ENCODE measurements at regions of chr11 and their contacts with region 1.

Region 1: DNA sequence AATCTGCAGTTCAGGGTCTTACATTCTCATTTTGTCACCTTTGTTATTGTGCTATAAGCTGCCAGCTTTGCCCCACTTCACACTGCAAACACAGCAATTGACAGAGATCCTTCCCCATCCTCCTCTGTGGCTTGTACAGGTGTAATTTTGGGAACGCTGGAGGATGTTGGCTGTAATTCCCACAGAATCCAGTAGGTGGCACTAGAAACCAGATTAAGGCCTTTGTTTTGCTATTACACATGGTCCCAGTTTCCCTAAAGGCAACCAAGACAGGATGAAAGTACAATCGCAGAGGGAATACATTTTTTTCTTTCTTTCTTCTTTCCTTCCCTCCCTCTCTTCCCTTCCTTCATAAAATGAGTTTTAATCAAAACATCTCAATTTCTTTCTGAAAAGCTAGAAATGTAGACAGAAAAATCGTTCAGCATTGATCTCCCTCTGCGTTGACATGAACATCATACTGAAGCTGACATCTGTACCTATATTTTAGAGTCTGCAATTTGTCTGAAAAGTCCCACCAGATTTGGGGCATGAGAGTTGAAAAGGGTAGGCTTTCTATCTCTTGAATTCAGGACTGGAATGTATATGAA is 21.3 kb upstream of the NELL1 start:
- DNase-seq: peak; percentile 37 to 50
- H3K4me3 ChIP-seq: no peak overlapping the region
- CTCF ChIP-seq: peak in 1 of 3 donors; percentile 60
- POLR2A ChIP-seq: no peak

Region 2: DNA sequence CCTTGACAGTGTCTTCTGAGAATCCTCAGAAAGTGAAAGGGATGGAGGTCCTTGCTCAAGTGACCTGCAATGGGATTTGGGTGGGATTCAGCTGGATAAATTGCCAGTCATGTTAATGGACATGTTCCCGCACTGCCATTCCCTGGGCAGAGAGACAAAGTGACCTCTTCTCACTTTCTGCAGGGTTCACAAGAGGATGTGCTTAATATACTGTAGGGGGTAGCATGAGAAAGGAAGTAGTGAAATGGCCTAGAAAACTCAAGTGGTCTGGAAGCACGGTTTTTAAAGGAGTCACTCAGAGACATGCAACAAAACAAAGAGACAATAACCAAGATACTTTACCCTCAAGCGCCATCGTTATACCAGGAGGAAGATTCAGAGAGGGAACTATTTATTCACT is 91.5 kb after region 1 on chr11:
- intact Hi-C with region 1: no loop called
- DNase-seq: no peak
- H3K4me3 ChIP-seq: no peak overlapping the region
- CTCF ChIP-seq: no peak
- POLR2A ChIP-seq: no peak

Region 3: DNA sequence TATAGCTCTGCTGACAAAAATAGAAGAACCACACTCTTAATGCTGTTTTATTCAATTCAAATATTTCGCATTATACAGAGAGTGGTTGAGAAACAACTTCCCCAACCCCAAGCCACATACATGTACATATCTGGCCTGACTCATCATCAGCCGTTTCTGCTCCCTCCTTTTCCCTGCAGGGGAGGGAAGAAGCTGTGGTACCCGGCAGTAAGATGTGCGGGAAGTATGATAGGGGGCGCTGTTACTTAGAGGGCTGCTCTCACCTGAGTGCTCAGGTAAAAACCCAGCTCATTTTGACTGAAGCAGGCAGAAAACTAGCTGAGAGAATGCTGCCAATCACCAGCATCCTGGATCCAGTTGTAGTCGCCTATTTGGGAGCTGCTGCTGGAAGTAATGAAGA is 106.9 kb after region 1 on chr11:
- intact Hi-C with region 1: no loop called
- DNase-seq: no peak
- H3K4me3 ChIP-seq: no peak overlapping the region
- CTCF ChIP-seq: no peak
- POLR2A ChIP-seq: no peak

Region 4: DNA sequence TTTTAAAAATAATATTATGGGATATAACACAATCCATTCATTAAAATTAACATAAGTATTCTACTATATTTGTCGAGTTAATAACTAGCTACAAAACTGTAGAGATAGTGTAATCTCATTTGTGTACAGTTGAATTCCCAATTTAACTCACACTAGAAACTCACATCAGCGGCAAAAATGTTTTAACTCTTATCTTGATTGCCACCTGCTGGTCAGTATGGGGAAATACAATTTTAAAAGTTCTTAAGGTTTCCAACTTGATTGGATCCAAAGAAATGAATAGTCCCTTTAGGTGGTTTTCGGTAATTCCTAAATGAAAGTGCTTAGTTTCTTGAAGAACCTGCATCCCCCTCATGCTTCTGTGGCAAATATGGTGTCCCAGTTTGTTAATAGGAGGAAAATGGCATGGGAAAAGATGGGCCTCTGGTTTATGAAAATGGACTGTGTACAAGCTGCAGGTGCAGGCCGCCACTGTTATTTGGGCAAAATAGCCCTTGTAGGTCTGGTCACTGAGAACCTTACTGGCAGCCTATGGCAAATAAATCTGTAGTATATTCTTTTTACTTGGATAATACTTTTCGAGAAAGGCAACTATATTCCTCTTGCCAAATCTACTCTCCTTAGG is 1656.4 kb after region 1 on chr11:
- intact Hi-C with region 1: loop called (anchors 10 kb)
- DNase-seq: no peak
- H3K4me3 ChIP-seq: no peak overlapping the region
- CTCF ChIP-seq: no peak
- POLR2A ChIP-seq: no peak